ENCODE measurements at regions of chr18 and their contacts with region 1.

Region 1: GRCh38 chr18:48951448-48952286 is 902 bp upstream of the SMAD7 start:
- DNase-seq: no peak
- H3K4me3 ChIP-seq: peak overlapping the region; percentile 83
- H3K27ac ChIP-seq: peak overlapping the region; percentile 97
- H3K27me3 ChIP-seq: no peaks in the 10 kb centered on the region
- CTCF ChIP-seq: peak; percentile 20; the same call in 1 of the 2 replicates

Region 2: DNA sequence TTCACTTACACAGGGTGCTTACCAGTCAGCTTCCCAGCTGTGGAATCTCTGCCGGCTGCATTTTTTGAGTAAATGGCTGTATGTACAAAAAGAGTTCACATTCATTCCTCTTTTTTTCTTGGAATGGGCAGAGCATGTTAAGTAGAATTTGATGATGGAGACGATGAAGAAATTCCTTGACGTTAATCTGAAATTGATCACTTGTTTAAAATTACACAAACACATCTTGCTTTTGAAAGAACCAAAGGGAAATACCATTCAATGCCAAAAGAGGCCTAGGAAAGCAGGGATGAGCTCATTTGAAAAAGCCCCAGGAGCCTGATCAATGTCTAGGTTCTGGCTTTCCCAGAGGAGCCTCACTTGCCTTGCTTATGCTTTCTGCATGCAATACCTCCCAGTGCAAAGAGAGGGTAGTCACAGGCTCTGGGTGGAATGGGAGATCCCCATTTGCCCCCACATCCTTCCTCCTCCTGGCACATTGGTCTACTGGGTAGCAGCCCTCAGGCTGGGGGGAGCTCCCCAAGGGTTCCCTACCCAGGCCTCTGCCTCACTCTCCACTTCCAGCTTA is 11.4 kb after region 1 on chr18:
- CTCF ChIA-PET with region 1: interaction called, 5 read pairs
- POLR2A ChIA-PET with region 1: interaction called, 11 read pairs
- DNase-seq: peak; percentile 67
- H3K4me3 ChIP-seq: no peak overlapping the region
- H3K27ac ChIP-seq: peak overlapping the region; percentile 84
- H3K27me3 ChIP-seq: no peaks in the 10 kb centered on the region
- CTCF ChIP-seq: peak; percentile 40; the same call in 1 of the 2 replicates

Region 3: GRCh38 chr18:49021433-49022129 is 69.9 kb after region 1 on chr18:
- CTCF ChIA-PET with region 1: interaction called, 13 read pairs
- POLR2A ChIA-PET with region 1: interaction called, 6 read pairs
- DNase-seq: no peak
- H3K4me3 ChIP-seq: no peak overlapping the region
- H3K27ac ChIP-seq: no peak overlapping the region
- H3K27me3 ChIP-seq: peaks cover 5% of the 10 kb centered on the region
- CTCF ChIP-seq: peak; percentile 39

Region 4: DNA sequence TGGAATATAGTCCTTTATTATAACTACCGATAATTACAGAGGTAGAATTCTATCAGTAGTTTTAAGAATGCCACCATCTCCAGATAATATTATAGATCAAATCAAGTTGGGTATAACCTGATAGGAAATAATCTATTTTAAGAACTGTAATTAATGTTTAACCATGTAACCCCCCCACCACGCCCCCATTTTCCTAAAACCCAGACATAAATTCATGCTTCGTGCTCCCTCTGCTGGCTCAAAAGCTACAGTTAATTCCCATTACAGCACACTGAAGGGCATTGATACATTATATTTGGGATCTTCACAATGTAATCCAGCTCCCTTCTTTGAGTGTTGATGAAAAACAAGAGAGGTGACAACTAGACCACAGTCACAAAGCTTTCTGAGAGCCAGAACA is 227.1 kb after region 1 on chr18:
- CTCF ChIA-PET with region 1: interaction called, 6 read pairs
- POLR2A ChIA-PET with region 1: interaction called, 10 read pairs
- DNase-seq: no peak
- H3K4me3 ChIP-seq: no peak overlapping the region
- H3K27ac ChIP-seq: no peak overlapping the region
- H3K27me3 ChIP-seq: no peaks in the 10 kb centered on the region
- CTCF ChIP-seq: peak; percentile 70

Measured in AG04450 (cell line).